Sigmoid colon (tissue), 7 donors: ENCODE measurements at regions of chr11 and their contacts with region 1.

Region 1: DNA sequence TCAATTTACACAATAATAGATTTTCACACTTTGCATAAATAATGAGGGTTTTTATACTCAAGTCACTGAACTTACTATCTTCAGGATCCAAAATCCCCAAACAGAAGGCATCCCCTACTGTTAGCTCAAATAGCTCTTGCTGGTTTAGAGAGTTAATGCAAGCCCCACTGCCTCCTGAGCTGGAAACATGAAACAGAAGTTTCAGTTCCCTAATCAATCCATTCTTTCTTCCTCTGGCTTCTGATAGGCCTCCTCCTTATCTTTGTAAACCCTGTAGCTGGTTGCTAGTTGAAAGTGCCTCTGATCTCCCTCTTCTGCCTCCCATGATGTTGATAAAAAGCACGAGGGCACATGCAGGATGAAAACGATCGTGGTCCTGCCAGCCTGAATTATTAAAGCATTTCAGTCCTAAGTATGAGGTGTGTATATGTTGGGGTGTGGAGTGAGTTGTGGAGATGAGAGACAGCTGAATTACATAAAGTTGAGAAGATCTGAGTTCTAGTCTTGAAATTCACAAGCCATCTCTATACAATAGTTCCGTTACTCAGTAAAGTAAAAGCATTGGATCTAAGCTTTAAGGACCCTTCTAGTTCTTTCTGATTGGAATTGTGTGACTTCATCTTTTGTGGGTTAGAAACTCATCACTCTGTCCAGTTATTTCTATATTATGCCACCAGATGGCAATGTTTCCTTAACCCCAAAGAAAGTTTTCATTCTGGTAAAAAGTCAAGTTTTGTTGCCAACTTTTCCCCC is 35.0 kb upstream of the EHF start:
- DNase-seq: no peak
- H3K4me3 ChIP-seq: no peak overlapping the region
- H3K27ac ChIP-seq: no peak overlapping the region
- H3K4me1 ChIP-seq: peaks cover 0 to 3% (median 0%) of the 10 kb centered on the region in 4 donors
- H3K27me3 ChIP-seq: no peaks in the 10 kb centered on the region
- CTCF ChIP-seq: peak; percentile 21 to 65 (median 48)
- EP300 ChIP-seq: no peak
- POLR2A ChIP-seq: no peak

Region 2: DNA sequence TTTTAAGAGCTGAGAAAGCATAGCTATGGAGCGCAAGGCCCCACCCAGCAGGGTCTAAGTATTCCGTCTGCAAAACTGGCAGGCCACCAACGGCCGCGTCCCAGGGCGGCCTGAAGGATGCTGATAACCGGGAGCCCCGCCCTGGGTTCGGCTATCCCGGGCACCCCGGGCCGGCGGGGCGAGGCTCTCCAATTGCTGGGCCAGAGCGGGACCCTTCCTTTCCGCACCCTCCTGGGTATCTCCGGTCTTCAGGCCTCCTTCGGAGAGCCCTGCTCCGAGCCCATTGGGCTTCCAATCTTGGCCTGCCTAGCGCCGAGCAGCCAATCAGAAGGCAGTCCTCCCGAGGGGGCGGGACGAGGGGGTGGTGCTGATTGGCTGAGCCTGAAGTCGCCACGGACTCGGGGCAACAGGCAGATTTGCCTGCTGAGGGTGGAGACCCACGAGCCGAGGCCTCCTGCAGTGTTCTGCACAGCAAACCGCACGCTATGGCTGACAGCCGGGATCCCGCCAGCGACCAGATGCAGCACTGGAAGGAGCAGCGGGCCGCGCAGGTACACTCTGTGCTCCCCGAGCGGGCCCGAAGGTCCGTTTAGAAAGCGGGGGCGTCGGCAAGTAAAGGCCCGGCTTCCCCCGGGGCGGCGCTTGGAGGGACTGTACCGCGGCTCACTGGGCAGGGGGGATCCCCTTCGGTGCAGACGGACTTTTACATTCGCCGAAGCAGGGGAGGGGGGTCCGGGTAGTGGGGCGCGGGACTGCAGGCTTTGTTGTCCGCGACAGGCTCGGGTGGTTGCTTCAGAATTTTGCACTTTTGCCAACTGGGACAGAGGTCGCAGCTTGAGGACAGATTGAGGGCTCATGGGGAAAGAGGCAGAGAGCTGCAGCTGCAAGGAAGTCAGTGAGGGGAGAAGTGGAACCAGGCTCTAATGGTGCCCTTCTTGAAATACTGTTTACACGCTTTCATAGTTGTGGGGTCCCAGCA is 147.1 kb before region 1 on chr11 and contains the start of gene CAT:
- intact Hi-C with region 1: no loop called
- DNase-seq: peak; percentile 99
- H3K4me3 ChIP-seq: peak within 1 kb of the TSS; percentile 67 to 90 (median 88)
- H3K27ac ChIP-seq: peak within 1 kb of the TSS; percentile 90 to 97 (median 92)
- H3K4me1 ChIP-seq: peaks cover 0 to 27% (median 19%) of the 10 kb centered on the region in 4 donors
- H3K27me3 ChIP-seq: no peaks in the 10 kb centered on the region
- CTCF ChIP-seq: no peak
- EP300 ChIP-seq: peak in 1 of 4 donors; percentile 19
- POLR2A ChIP-seq: peak in 1 of 2 donors; percentile 45
- total RNA-seq, gene CAT: 77.4 to 164 (median 103) TPM

Region 3: GRCh38 chr11:34546511-34547222 is 39.2 kb before region 1 on chr11:
- intact Hi-C with region 1: no loop called
- DNase-seq: no peak
- H3K4me3 ChIP-seq: no peak overlapping the region
- H3K27ac ChIP-seq: no peak overlapping the region
- H3K4me1 ChIP-seq: no peaks in the 10 kb centered on the region
- H3K27me3 ChIP-seq: no peaks in the 10 kb centered on the region
- CTCF ChIP-seq: no peak
- EP300 ChIP-seq: no peak
- POLR2A ChIP-seq: no peak

Region 4: DNA sequence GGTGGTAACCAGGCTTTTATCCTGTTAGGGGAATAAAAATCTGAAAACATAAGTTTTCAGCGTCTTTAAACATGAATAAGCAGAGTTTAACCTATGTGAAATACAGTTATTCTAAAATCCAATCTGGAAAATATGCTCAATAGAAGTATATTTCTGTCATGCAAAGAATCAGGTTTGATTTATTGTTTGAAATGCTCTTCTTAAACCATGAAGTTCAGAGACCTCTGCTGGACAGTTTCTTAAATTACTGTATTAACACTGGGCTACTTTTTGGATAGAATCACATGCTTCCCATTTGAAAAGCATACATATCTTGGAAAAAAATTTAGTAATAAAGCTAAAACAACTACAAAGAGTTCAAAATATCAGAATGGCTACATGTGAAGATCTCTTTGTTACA is 304.9 kb after region 1 on chr11:
- intact Hi-C with region 1: loop called (anchors 2 kb)
- DNase-seq: no peak
- H3K4me3 ChIP-seq: no peak overlapping the region
- H3K27ac ChIP-seq: no peak overlapping the region
- H3K4me1 ChIP-seq: no peaks in the 10 kb centered on the region
- H3K27me3 ChIP-seq: no peaks in the 10 kb centered on the region
- CTCF ChIP-seq: peak in 2 of 4 experiments; percentile 21 to 34
- EP300 ChIP-seq: no peak
- POLR2A ChIP-seq: no peak

Region 5: GRCh38 chr11:34899633-34900016 is 313.7 kb after region 1 on chr11:
- intact Hi-C with region 1: loop called (anchors 2 kb)
- DNase-seq: no peak
- H3K4me3 ChIP-seq: no peak overlapping the region
- H3K27ac ChIP-seq: no peak overlapping the region
- H3K4me1 ChIP-seq: no peaks in the 10 kb centered on the region
- H3K27me3 ChIP-seq: no peaks in the 10 kb centered on the region
- CTCF ChIP-seq: no peak
- EP300 ChIP-seq: no peak
- POLR2A ChIP-seq: no peak

Region 6: DNA sequence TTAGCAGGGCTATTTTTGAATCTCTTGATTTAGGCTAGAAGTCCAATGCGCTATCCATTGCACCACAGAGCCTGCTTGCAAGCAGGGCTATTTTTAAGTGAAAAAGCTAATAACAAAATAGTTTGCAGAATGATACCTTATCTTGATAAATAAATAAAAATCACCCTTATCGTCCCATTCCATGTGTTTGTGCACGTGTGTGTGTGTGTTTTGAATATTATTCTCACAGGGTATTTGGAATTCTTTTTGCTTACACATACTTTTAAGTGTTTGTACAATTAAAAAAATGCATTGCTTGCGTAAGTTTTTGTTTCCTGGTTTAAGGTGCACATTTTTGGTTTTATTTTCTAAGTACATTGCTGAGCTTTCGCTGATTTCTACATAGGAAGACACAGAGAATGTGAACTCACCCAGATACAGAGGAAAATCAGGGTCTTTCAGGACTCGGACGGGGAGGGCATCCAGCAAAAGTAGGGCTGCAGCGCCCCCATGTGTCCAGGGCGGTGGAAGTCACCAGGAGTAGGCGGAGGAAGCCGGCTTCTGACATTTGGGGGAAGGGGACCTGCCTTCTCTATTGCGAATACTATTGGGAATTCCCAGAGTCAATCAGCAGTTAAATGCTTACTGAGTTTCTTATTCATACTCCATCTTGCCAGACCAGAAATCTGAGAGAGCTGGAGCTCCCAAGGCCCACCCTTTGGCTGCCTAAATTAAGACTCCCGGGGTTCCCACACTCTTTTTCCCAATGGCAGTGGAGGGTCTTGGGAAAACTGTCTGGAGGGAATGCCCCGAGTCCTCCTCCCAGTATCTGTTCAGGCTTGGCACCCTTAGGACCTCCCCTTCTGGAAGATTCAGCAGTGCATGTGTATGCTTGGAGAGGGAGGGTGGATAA is 806.3 kb after region 1 on chr11:
- intact Hi-C with region 1: loop called (anchors 2 kb)
- DNase-seq: peak; percentile 85
- H3K4me3 ChIP-seq: peak overlapping the region in 2 of 4 donors; percentile 15 to 36
- H3K27ac ChIP-seq: no peak overlapping the region
- H3K4me1 ChIP-seq: peaks cover 0 to 17% (median 7%) of the 10 kb centered on the region in 4 donors
- H3K27me3 ChIP-seq: no peaks in the 10 kb centered on the region
- CTCF ChIP-seq: peak; percentile 78 to 91 (median 84)
- EP300 ChIP-seq: peak in 1 of 4 donors; percentile 11
- POLR2A ChIP-seq: no peak